Activated T-helper 1 cell treated with anti-CD3 and anti-CD28 coated beads, Interleukin-12 subunit alpha, Interleukin-12 subunit beta, Interleukin-2, Interleukin-4 antibody, amounts not matched to agents 30 ng/mL and 10 ng/mL and 1 ng/mL, durations not matched to agents 14 hours and 24 hours and 36 hours (primary cell): ENCODE measurements at regions of chr13 and their contacts with region 1.

Region 1: GRCh38 chr13:25806264-25806974 is 245.4 kb downstream of the SHISA2 start:
- DNase-seq: peak; percentile 11
- H3K4me3 Mint-ChIP-seq: peak overlapping the region; percentile 61
- H3K27ac Mint-ChIP-seq: peak overlapping the region; percentile 87
- H3K4me1 Mint-ChIP-seq: peaks cover 28% of the 10 kb centered on the region
- H3K27me3 Mint-ChIP-seq: no peaks in the 10 kb centered on the region

Region 2: GRCh38 chr13:25752957-25753551 is 53.4 kb before region 1 on chr13:
- intact Hi-C with region 1: loop called (anchors 1 kb)
- DNase-seq: peak; percentile 35
- H3K4me3 Mint-ChIP-seq: peak overlapping the region; percentile 35
- H3K27ac Mint-ChIP-seq: peak overlapping the region; percentile 32
- H3K4me1 Mint-ChIP-seq: peaks cover 46% of the 10 kb centered on the region
- H3K27me3 Mint-ChIP-seq: no peaks in the 10 kb centered on the region

Region 3: DNA sequence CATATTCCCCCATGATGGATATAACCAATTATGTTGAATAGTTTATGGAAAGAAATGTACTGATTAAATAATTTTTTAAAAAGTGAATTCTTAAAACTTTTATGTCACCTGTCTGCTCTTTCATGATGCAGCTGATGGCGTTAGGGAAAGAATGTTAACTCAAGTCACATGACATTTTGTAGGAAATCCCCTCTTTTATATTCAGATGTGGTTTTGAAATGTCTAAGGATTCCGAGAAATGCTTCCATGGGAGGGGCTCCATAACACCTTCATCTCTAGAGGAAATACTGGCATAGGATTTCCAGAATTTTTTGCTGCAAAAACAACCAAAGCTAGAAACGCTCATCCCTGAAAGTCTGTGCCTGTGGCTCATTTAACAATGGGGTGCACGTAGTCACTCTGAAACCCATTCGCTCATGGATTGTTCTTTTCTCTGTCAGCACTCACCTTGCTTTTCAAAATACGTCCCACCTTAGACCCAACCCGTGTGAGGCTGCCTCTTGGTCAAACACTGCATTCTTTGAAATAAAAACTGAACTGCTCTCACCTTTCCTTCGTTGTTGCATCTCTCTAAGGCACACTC is 43.5 kb before region 1 on chr13:
- intact Hi-C with region 1: loop called (anchors 1 kb)
- DNase-seq: peak; percentile 19
- H3K4me3 Mint-ChIP-seq: peak overlapping the region; percentile 55
- H3K27ac Mint-ChIP-seq: peak overlapping the region; percentile 93
- H3K4me1 Mint-ChIP-seq: peaks cover 51% of the 10 kb centered on the region
- H3K27me3 Mint-ChIP-seq: no peaks in the 10 kb centered on the region

Region 4: DNA sequence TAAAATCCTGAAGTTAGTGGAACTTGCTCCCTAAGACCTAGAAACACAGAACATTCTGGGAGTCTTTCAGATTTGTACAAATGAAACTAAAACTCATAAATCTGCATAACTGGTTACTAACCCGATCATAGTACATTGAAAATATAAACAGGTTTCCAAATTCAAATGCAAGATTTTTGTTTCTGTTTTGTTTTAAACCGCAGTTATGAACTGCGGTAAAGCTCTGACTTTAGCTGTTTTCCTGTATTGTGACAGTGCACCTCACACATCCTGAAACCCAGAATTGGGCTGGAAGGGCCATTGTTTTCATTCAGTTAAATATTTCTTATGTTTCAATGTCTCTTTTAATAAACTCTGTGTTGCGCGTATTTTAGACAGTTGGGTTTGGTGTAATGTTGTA is 40.7 kb after region 1 on chr13:
- intact Hi-C with region 1: loop called (anchors 1 kb)
- DNase-seq: peak; percentile 12
- H3K4me3 Mint-ChIP-seq: peak overlapping the region; percentile 54
- H3K27ac Mint-ChIP-seq: peak overlapping the region; percentile 79
- H3K4me1 Mint-ChIP-seq: peaks cover 62% of the 10 kb centered on the region
- H3K27me3 Mint-ChIP-seq: peaks cover 5% of the 10 kb centered on the region